Activated naive CD4-positive, alpha-beta T cell treated with anti-CD3 and anti-CD28 coated beads for 36 hours (primary cell): ENCODE measurements at regions of chr9 and their contacts with region 1.

Region 1: GRCh38 chr9:5608298-5609225 is 20.3 kb upstream of the RIC1 start:
- DNase-seq: no peak
- H3K4me3 Mint-ChIP-seq: peak overlapping the region; percentile 60
- H3K27ac Mint-ChIP-seq: no peak overlapping the region
- H3K4me1 Mint-ChIP-seq: peaks cover 22% of the 10 kb centered on the region
- H3K27me3 Mint-ChIP-seq: no peaks in the 10 kb centered on the region

Region 2: DNA sequence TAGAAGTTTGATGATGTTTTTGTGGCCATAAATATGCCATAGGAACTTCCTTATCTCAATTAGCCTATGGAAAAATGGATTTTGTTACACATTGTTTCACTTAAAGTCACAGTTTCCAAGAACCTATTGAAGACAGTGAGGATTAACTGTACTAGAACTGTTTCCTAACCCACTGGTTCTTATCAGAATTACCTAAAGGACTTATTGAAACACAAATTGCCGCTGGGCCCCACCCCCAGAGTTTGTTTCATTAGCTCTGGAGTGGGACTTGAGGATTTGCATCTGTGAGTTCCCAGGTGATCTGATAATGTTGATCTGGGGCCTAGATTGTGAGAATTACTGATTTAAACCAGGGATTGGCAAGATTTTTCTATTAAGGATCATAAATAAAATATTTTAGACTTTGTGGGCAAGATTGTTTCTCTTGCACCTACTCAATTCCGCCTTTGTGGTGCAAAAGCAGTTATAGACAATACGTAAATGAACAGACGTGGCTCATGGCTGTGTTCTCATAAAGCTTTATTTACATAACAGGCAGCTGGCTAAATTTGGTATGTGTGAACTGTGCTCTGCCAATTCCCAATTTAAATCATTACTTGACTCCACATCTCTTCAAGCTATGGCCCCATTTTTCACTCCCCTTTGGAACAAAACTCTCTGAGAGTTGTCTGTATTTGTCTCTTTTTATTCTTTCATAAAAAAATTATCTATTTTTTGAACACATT is 614.2 kb before region 1 on chr9:
- CTCF ChIA-PET with region 1: no interaction called
- intact Hi-C with region 1: no loop called
- DNase-seq: no peak
- H3K4me3 Mint-ChIP-seq: no peak overlapping the region
- H3K27ac Mint-ChIP-seq: peak overlapping the region; percentile 8
- H3K4me1 Mint-ChIP-seq: peaks cover 53% of the 10 kb centered on the region
- H3K27me3 Mint-ChIP-seq: no peaks in the 10 kb centered on the region

Region 3: GRCh38 chr9:5205071-5205470 is 403.5 kb before region 1 on chr9:
- CTCF ChIA-PET with region 1: no interaction called
- intact Hi-C with region 1: loop called (anchors 5 kb)
- DNase-seq: no peak
- H3K4me3 Mint-ChIP-seq: no peak overlapping the region
- H3K27ac Mint-ChIP-seq: no peak overlapping the region
- H3K4me1 Mint-ChIP-seq: peaks cover 8% of the 10 kb centered on the region
- H3K27me3 Mint-ChIP-seq: no peaks in the 10 kb centered on the region

Region 4: GRCh38 chr9:5650356-5651105 is 42.0 kb after region 1 on chr9:
- CTCF ChIA-PET with region 1: no interaction called
- intact Hi-C with region 1: no loop called
- DNase-seq: no peak
- H3K4me3 Mint-ChIP-seq: no peak overlapping the region
- H3K27ac Mint-ChIP-seq: no peak overlapping the region
- H3K4me1 Mint-ChIP-seq: peaks cover 12% of the 10 kb centered on the region
- H3K27me3 Mint-ChIP-seq: no peaks in the 10 kb centered on the region